MCF 10A (cell line): ENCODE measurements at regions of chr20 and their contacts with region 1.

Region 1: DNA sequence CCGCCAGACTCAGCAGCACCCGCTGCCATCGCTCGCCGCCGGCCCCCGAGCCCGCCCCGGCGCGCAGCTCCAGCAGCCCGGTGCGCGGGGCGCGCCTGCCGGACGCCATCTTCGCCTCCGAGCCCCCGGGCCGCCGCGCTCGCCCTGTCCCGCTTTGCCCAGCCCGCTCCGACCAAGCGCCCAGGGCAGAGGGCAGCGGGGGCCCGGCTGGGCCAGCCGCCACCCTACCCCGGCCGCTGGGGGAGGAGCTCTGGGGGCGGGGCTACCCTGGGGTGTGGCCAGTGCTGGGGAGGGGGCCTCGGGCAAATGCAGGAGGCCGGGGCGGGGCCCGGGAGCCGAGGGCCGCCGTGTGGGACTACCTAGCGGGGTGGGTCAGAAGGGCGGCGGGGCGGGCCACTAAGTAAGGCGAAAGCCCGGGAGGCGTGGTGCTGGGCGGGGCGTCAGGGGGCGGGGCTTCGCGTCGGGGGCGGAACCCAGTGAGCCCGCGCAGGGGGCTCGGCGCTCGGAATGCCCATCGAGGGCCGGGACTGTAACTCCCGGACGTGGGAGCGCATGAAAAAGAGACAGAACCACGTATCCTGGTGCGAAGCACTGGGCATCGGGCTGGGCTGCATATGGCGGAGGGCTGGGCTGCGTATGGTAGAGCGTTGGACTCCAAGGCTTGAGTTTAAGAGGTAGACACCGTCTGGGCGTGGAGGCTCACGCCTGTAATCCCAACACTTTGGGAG is at the start of gene SNTA1:
- DNase-seq: peak; percentile 77
- H3K4me3 Mint-ChIP-seq: peak within 1 kb of the TSS; percentile 73
- H3K27ac Mint-ChIP-seq: no peak within 1 kb of the TSS
- H3K4me1 Mint-ChIP-seq: peaks cover 4% of the 10 kb centered on the region
- H3K27me3 Mint-ChIP-seq: no peaks in the 10 kb centered on the region
- CTCF ChIP-seq: no peak
- total RNA-seq, gene SNTA1: 1.4 and 2.0 TPM in 2 replicates

Region 2: DNA sequence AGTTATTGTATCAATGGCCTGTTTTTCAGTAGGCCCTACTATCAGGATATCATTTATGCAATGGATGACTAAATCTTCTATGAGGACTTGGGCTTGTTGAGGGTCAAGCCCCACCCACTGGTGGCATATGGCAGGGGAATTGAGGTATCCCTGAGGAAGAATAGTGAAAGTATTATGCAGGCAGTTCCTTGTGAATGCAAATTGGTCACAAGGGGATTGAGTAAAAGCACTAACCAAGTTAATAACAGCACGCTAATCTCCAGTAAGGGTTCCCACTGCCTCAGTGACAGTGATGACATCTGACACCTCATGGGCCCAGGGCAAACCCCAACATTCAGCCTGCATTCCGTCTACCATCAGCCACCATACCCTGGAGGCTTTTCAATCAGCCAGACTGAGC is 193.0 kb before region 1 on chr20:
- CTCF ChIA-PET with region 1: no interaction called
- POLR2A ChIA-PET with region 1: no interaction called
- intact Hi-C with region 1: no loop called
- DNase-seq: no peak
- H3K4me3 Mint-ChIP-seq: no peak overlapping the region
- H3K27ac Mint-ChIP-seq: no peak overlapping the region
- H3K4me1 Mint-ChIP-seq: no peaks in the 10 kb centered on the region
- H3K27me3 Mint-ChIP-seq: peaks cover 30% of the 10 kb centered on the region
- CTCF ChIP-seq: no peak

Region 3: DNA sequence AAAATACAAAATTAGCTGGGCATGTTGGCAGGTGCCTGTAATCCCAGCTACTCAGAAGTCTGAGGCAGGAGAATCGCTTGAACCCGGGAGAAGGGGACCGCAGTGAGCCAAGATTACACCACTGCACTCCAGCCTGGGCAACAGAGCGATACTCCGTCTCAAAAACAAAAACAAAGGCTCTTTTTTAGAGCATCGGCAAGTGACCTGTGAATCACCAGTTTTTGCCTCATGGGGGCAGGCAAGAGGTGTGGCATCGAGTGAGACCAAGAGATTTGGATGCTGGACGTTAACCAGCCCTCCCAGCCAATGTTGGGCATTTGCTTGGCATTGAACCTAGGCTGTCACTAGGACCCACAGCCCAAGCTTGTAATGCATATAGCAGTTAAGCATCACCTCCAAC is 27.7 kb before region 1 on chr20:
- CTCF ChIA-PET with region 1: interaction called, 3 read pairs
- POLR2A ChIA-PET with region 1: no interaction called
- intact Hi-C with region 1: loop called (anchors 2 kb)
- DNase-seq: peak; percentile 77
- H3K4me3 Mint-ChIP-seq: no peak overlapping the region
- H3K27ac Mint-ChIP-seq: no peak overlapping the region
- H3K4me1 Mint-ChIP-seq: no peaks in the 10 kb centered on the region
- H3K27me3 Mint-ChIP-seq: no peaks in the 10 kb centered on the region
- CTCF ChIP-seq: peak; percentile 42